ENCODE measurements at regions of chr10 and their contacts with region 1.

Region 1: DNA sequence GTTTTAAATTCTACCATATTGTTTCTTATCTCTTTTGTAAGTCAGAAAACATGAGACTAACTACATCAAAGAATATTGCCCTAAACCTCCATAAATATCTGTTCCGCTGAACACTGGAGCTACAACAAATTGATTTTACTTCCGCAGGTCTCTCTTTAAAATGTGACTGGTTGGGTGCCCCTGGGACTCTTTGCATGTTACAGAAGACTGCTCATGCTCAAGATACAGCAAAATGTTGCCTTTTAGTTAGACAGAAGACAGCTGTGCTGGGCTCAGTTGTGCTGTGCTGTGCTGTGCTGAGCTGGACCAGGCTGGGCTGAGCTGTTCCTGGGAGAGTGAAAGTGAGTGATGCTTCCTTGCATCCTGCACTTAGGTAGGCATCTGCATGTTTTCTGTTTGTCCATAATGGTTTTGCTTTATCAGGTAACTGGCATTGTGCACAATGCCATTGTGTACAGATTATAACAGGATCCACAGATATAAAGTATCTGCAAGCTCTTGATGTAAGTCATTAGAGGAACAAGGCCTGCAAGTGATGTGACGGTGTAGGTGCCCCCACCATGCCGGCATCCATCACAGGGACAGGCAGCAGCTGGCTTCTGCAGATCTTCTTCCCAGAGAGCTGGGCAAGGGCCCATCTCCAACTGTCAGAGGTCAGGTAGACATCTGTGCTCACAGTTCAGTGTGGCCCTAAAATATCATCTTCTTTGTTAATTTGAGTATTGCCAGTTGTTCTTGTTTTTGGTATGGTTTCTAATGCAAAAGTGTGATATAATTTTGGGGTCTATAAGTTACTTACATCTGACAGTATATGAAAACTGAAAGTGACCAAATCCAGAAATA is 972.5 kb upstream of the CELF2 start:
- DNase-seq: peak; percentile 94
- H3K4me3 ChIP-seq: peak overlapping the region; percentile 70
- H3K27ac ChIP-seq: peak overlapping the region; percentile 93
- H3K4me1 ChIP-seq: peaks cover 65% of the 10 kb centered on the region
- CTCF ChIP-seq: no peak

Region 2: DNA sequence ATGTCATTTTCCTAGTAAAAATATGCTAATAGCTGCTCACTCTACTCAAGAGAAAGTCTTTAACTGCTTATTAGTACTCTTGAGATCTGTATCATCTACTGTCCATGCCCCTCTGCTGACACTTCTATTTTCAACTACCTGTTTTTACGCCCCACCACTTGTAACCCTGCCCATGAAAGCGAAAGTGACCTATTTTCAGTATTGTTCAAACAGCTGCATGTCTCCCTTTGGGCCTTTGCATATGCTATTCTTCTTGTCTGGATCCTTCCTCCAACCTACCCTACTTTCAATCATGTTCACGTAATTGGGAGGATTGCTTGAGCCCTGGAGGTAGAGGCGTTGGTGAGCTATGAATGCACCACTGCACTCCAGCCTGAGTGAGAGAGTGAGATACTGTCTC is 509.4 kb before region 1 on chr10:
- CTCF ChIA-PET with region 1: no interaction called
- POLR2A ChIA-PET with region 1: interaction called, 4 read pairs
- intact Hi-C with region 1: loop called (anchors 2 kb)
- DNase-seq: peak; percentile 89
- H3K4me3 ChIP-seq: peak overlapping the region; percentile 50
- H3K27ac ChIP-seq: peak overlapping the region; percentile 90
- H3K4me1 ChIP-seq: peaks cover 36% of the 10 kb centered on the region
- CTCF ChIP-seq: no peak

Region 3: GRCh38 chr10:9707216-9707615 is 337.9 kb before region 1 on chr10:
- CTCF ChIA-PET with region 1: no interaction called
- POLR2A ChIA-PET with region 1: interaction called, 9 read pairs
- intact Hi-C with region 1: loop called (anchors 1 kb)
- DNase-seq: peak; percentile 55
- H3K4me3 ChIP-seq: peak overlapping the region; percentile 62
- H3K27ac ChIP-seq: peak overlapping the region; percentile 77
- H3K4me1 ChIP-seq: peaks cover 23% of the 10 kb centered on the region
- CTCF ChIP-seq: no peak

Region 4: GRCh38 chr10:9992661-9993060 is 52.5 kb before region 1 on chr10:
- CTCF ChIA-PET with region 1: no interaction called
- POLR2A ChIA-PET with region 1: no interaction called
- intact Hi-C with region 1: no loop called
- DNase-seq: no peak
- H3K4me3 ChIP-seq: no peak overlapping the region
- H3K27ac ChIP-seq: no peak overlapping the region
- H3K4me1 ChIP-seq: no peaks in the 10 kb centered on the region
- CTCF ChIP-seq: 0 out of 2 replicates have a peak, but pooled peaks have one; percentile 10

Region 5: GRCh38 chr10:10007957-10008356 is 37.2 kb before region 1 on chr10:
- CTCF ChIA-PET with region 1: no interaction called
- POLR2A ChIA-PET with region 1: interaction called, 33 read pairs
- intact Hi-C with region 1: loop called (anchors 1 kb)
- DNase-seq: peak; percentile 84
- H3K4me3 ChIP-seq: peak overlapping the region; percentile 35
- H3K27ac ChIP-seq: peak overlapping the region; percentile 62
- H3K4me1 ChIP-seq: peaks cover 36% of the 10 kb centered on the region
- CTCF ChIP-seq: no peak

Region 6: DNA sequence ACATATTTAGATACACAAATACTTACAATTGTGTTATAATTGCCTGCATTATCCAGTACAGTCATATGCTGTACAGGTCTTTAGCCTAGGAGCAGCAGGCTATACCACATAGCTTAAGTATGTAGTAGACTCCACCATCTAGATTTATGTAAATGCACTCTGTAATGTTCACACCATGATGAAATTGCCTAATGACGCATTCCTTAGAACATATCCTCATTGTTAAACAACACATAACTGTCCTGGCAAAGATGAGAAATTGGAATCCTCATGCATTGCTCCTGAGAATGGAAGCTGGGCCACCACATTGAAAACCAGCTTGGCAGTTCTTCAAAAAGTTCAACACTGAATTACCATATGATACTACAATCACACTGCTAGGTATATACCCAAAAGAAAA is 30.3 kb before region 1 on chr10:
- CTCF ChIA-PET with region 1: no interaction called
- POLR2A ChIA-PET with region 1: interaction called, 33 read pairs
- intact Hi-C with region 1: no loop called
- DNase-seq: no peak
- H3K4me3 ChIP-seq: no peak overlapping the region
- H3K27ac ChIP-seq: no peak overlapping the region
- H3K4me1 ChIP-seq: peaks cover 7% of the 10 kb centered on the region
- CTCF ChIP-seq: no peak

Region 7: DNA sequence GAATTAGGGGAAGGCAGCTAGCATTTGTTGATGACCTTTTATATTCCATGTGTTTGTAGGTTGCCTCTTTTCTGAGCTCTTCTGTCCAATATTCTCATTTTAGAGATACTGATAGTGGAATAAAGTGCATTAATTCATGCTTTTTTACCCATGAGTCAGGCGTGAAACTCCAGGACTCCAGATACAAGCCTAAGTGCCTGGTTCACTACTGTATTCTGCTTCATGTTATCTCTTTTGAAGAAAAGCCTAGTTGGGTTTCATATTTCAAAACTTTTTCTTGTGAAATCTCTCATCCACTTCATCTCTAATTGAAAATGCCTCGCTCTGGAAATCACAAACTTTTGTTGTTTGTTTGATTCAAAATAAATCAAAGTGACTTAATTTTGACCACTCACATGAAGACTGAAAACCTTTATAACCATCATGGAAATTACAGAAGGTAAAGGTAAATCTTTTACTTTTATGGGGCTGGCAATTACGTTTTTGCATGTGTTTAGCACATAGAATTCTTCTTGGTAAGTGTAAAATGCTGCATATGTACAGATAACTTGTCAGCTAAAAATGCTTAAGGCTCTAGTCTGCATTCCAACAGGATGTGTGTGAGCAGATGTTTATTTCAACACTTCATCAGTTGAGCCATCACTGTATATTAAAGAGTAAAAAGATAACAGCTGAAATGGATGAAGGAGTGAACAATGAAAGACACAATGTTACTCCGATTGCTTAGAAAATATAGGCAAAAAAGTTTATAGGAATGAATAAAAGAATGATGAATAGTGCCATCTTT is 10.7 kb after region 1 on chr10:
- CTCF ChIA-PET with region 1: interaction called, 3 read pairs
- POLR2A ChIA-PET with region 1: interaction called, 12 read pairs
- intact Hi-C with region 1: no loop called
- DNase-seq: no peak
- H3K4me3 ChIP-seq: no peak overlapping the region
- H3K27ac ChIP-seq: no peak overlapping the region
- H3K4me1 ChIP-seq: peaks cover 19% of the 10 kb centered on the region
- CTCF ChIP-seq: no peak

Region 8: GRCh38 chr10:10110844-10111490 is 65.8 kb after region 1 on chr10:
- CTCF ChIA-PET with region 1: no interaction called
- POLR2A ChIA-PET with region 1: no interaction called
- intact Hi-C with region 1: no loop called
- DNase-seq: no peak
- H3K4me3 ChIP-seq: no peak overlapping the region
- H3K27ac ChIP-seq: no peak overlapping the region
- H3K4me1 ChIP-seq: no peaks in the 10 kb centered on the region
- CTCF ChIP-seq: no peak

Region 9: DNA sequence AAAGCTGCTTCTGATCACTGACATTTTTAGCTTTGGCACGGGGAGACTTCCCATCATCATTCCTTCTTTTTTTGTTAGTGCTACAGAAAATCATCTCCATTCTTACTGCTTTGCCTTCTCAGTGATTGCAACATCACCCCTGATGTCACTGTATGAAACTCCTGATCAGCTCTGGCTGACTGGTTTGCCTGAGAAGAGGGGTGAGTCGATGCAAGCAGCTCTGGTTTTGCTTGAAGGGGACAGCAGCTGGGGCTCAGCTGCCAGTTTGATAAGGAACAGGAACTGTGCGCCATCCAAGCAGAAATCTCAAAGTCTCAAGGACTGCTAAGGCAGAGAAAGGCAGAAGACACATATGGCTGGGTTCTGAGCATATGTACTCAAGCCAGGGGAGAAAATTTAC is 164.0 kb after region 1 on chr10:
- CTCF ChIA-PET with region 1: no interaction called
- POLR2A ChIA-PET with region 1: interaction called, 9 read pairs
- intact Hi-C with region 1: loop called (anchors 2 kb)
- DNase-seq: peak; percentile 53
- H3K4me3 ChIP-seq: no peak overlapping the region
- H3K27ac ChIP-seq: no peak overlapping the region
- H3K4me1 ChIP-seq: peaks cover 14% of the 10 kb centered on the region
- CTCF ChIP-seq: no peak